Endothelial cell of umbilical vein (primary cell): ENCODE measurements at regions of chr6 and their contacts with region 1.

Region 1: DNA sequence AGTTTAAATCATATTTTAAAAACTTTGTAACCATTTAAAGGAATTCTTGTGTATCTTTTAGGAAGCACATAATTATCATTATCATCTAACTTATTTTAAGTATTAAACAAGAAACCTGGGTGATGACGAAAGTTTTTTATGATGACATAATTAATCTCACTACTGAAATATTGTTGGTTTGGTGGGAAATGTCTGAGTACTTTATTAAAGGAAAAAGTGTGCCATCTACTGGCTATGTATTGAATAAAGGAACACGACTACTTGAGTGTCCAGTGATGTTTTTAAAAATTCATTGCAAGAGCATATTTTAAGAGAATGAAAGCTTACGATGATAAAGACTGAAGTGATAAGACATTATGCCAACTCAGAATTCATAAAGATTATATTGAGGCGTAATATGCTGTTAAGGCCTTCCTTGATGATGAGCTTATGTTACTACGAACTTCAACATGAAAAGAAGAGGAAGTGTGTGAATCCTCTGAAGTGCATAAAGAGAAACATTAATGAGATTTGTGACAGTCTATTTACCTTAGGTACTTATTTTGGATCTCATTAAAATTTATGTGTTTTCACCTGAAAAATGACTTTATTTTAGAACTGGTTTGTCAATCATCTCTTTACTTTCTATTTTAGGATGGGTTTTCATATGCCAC is 12.0 kb upstream of the TRMT11 start:
- DNase-seq: peak; percentile 73
- H3K4me3 ChIP-seq: no peak overlapping the region
- H3K27ac ChIP-seq: no peak overlapping the region
- H3K4me1 ChIP-seq: no peaks in the 10 kb centered on the region
- H3K27me3 ChIP-seq: no peaks in the 10 kb centered on the region
- CTCF ChIP-seq: peak; percentile 19 to 33
- POLR2A ChIP-seq: no peak

Region 2: GRCh38 chr6:124234801-124235200 is 1739.5 kb before region 1 on chr6:
- CTCF ChIA-PET with region 1: no interaction called
- POLR2A ChIA-PET with region 1: no interaction called
- dilution Hi-C with region 1: no loop called
- intact Hi-C with region 1: no loop called
- DNase-seq: no peak
- H3K4me3 ChIP-seq: no peak overlapping the region
- H3K27ac ChIP-seq: no peak overlapping the region
- H3K4me1 ChIP-seq: no peaks in the 10 kb centered on the region
- H3K27me3 ChIP-seq: no peaks in the 10 kb centered on the region
- CTCF ChIP-seq: no peak
- POLR2A ChIP-seq: no peak

Region 3: DNA sequence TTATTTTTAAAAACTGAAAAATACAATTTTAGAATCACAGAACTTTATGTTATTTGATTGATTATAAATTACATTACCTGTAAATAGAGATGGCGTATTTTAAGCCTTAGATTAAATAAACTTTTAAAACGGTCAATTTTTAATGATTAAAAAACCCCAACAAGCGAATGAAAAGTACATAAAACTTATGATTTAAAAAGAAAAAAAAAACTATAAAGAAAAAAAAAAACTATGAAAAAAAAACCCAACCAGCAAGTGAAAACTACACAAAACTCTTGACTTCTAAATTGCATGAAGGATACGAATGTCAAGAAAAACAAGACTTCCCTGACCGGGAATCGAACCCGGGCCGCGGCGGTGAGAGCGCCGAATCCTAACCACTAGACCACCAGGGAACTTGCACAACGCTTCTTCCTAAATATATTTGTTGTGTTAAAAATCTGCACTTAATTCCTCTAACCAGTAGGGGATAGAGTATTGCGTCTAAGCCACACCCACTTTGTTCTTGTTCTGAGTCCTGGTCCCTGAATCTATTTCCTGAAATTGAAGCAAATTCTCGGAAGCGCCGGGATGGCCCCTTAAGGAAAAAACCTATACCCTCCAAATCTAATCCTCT is 194.3 kb before region 1 on chr6:
- CTCF ChIA-PET with region 1: interaction called, 21 read pairs
- POLR2A ChIA-PET with region 1: interaction called, 4 read pairs
- dilution Hi-C with region 1: no loop called
- intact Hi-C with region 1: loop called (anchors 2 kb)
- DNase-seq: peak; percentile 96
- H3K4me3 ChIP-seq: peak overlapping the region; percentile 62 to 95 (median 84)
- H3K27ac ChIP-seq: peak overlapping the region; percentile 94
- H3K4me1 ChIP-seq: peaks cover 8% of the 10 kb centered on the region
- H3K27me3 ChIP-seq: peaks cover 8 to 10% of the 10 kb centered on the region in 2 experiments
- CTCF ChIP-seq: peak in 1 of 2 donors; percentile 5
- POLR2A ChIP-seq: no peak

Region 4: DNA sequence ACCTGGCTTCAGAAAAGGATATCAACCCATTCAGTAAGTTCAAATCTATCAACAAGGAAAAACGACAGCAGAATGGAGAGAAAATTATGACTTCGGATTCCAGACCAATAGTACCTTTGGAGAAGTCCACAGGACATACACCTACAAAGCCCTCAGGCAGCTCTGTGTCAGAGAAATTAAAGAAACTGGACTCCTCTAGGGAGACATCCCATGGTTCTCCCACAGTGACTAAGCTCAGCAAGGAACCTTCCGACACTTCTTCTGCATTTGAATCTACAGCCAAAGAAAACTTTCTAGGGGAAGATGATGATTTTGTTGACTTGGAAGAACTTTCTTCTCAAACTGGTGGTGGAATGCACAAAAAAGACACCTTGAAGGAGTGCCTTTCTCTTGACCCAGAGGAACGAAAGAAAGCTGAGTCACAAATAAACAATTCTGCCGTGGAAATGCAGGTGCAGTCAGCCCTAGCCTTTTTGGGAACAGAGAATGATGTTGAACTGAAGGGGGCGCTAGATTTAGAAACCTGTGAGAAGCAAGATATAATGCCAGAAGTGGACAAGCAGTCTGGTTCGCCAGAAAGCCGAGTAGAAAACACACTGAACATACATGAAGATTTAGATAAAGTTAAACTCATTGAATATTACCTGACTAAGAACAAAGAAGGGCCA is 85.2 kb before region 1 on chr6:
- CTCF ChIA-PET with region 1: interaction called, 14 read pairs
- POLR2A ChIA-PET with region 1: no interaction called
- dilution Hi-C with region 1: no loop called
- intact Hi-C with region 1: no loop called
- DNase-seq: peak; percentile 71
- H3K4me3 ChIP-seq: no peak overlapping the region
- H3K27ac ChIP-seq: no peak overlapping the region
- H3K4me1 ChIP-seq: no peaks in the 10 kb centered on the region
- H3K27me3 ChIP-seq: no peaks in the 10 kb centered on the region
- CTCF ChIP-seq: peak; percentile 40 to 49
- POLR2A ChIP-seq: no peak

Region 5: DNA sequence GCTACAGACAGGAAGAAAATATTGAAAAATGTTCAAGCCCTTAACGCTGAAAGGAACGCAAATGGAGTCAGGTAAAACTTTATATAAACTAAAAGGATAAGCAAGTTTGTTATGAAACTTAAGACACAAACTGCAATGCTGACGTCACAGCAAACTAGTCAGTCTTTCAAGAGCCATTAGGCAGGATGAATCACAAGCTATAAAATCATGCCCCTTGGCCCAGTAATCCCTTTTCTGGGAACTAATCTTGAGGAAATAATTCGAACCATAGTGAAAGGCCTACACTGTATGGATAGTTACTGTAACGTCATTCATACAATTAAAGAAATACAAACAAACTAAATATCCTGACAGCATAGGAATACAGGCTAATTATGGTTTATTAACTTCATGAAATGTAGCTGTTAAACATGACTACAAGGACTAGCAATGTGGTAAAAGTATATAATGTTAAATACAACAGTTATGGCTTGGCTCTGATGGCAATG is 60.4 kb before region 1 on chr6:
- CTCF ChIA-PET with region 1: interaction called, 10 read pairs
- POLR2A ChIA-PET with region 1: no interaction called
- dilution Hi-C with region 1: no loop called
- intact Hi-C with region 1: no loop called
- DNase-seq: peak; percentile 78
- H3K4me3 ChIP-seq: no peak overlapping the region
- H3K27ac ChIP-seq: peak overlapping the region; percentile 15
- H3K4me1 ChIP-seq: peaks cover 39% of the 10 kb centered on the region
- H3K27me3 ChIP-seq: no peaks in the 10 kb centered on the region
- CTCF ChIP-seq: no peak
- POLR2A ChIP-seq: no peak

Region 6: DNA sequence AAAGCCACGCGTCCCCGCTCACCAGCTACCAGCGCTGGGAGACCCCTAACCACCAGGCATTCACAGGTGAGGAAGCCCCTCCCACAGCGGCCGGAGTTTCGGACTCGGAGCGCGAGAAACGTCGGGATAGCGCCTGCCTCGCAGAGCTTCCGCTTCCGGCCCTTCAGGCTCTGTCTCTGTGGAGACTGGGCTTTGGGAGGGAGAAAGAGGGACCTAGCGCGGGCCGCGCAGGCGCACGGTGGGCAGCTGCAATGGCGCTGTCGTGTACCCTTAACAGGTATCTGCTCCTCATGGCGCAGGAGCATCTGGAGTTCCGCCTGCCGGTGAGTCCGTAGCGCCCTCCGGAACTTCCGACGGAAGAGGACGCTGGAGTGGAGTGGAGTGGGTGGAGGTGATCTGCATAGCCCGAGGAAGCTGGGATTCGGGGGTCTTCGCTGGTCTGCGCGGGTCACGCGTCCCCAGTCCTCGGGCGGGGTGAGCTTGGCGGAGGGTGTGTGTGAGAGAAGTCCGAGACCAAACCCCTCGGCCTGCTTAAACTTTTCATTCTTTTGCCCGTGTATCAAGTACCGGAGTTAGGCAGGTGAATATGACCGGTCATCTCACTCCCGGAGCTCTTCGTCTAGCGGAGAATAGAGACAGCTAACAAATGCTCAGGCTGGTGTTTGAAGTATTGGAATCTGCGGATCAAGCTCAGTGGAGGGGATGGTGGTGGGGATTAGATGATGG is 12.1 kb after region 1 on chr6 and contains the start of gene TRMT11:
- CTCF ChIA-PET with region 1: interaction called, 22 read pairs
- POLR2A ChIA-PET with region 1: no interaction called
- dilution Hi-C with region 1: no loop called
- intact Hi-C with region 1: no loop called
- DNase-seq: peak; percentile 87
- H3K4me3 ChIP-seq: peak within 1 kb of the TSS; percentile 55 to 92 (median 82)
- H3K27ac ChIP-seq: peak within 1 kb of the TSS; percentile 51
- H3K4me1 ChIP-seq: peaks cover 14% of the 10 kb centered on the region
- H3K27me3 ChIP-seq: no peaks in the 10 kb centered on the region
- CTCF ChIP-seq: no peak
- POLR2A ChIP-seq: peak; percentile 96
- total RNA-seq, gene TRMT11: 10.7 and 11.3 TPM in 2 replicates

Region 7: DNA sequence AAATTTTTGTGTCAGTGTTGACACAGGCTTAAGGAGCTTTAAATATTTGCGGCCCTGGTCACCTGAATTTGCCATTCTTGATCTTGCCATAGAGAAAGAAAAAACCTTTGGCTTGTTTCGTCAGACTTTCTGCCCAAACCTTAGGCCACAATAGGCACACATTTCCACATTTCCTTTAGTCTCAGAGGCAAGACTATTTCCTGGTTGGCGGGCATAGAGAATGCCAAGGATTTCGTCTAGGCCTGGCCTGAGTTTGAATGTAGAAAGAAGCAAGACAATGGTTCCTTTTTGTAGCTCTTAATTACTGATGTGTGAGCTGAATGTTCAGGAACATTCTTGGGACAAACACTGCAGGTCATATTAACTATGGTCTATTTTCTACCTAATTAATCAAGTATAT is 120.1 kb after region 1 on chr6:
- CTCF ChIA-PET with region 1: no interaction called
- POLR2A ChIA-PET with region 1: no interaction called
- dilution Hi-C with region 1: no loop called
- intact Hi-C with region 1: no loop called
- DNase-seq: no peak
- H3K4me3 ChIP-seq: no peak overlapping the region
- H3K27ac ChIP-seq: no peak overlapping the region
- H3K4me1 ChIP-seq: no peaks in the 10 kb centered on the region
- H3K27me3 ChIP-seq: no peaks in the 10 kb centered on the region
- CTCF ChIP-seq: no peak
- POLR2A ChIP-seq: no peak

Region 8: GRCh38 chr6:126112144-126112632 is 137.8 kb after region 1 on chr6:
- CTCF ChIA-PET with region 1: no interaction called
- POLR2A ChIA-PET with region 1: no interaction called
- dilution Hi-C with region 1: no loop called
- intact Hi-C with region 1: no loop called
- DNase-seq: no peak
- H3K4me3 ChIP-seq: no peak overlapping the region
- H3K27ac ChIP-seq: no peak overlapping the region
- H3K4me1 ChIP-seq: no peaks in the 10 kb centered on the region
- H3K27me3 ChIP-seq: no peaks in the 10 kb centered on the region
- CTCF ChIP-seq: no peak
- POLR2A ChIP-seq: no peak